Mammary epithelial cell (primary cell): ENCODE measurements at regions of chr16 and their contacts with region 1.

Region 1: GRCh38 chr16:2251483-2252240 is at the start of gene ECI1:
- DNase-seq: peak; percentile 93
- H3K4me3 ChIP-seq: peak within 1 kb of the TSS; percentile 56 to 61 (median 59)
- H3K27ac ChIP-seq: peak within 1 kb of the TSS; percentile 69
- H3K4me1 ChIP-seq: peaks cover 20% of the 10 kb centered on the region
- H3K27me3 ChIP-seq: no peaks in the 10 kb centered on the region
- CTCF ChIP-seq: peak; percentile 24 to 66
- total RNA-seq, gene ECI1: 79.3 to 84.7 TPM

Region 2: DNA sequence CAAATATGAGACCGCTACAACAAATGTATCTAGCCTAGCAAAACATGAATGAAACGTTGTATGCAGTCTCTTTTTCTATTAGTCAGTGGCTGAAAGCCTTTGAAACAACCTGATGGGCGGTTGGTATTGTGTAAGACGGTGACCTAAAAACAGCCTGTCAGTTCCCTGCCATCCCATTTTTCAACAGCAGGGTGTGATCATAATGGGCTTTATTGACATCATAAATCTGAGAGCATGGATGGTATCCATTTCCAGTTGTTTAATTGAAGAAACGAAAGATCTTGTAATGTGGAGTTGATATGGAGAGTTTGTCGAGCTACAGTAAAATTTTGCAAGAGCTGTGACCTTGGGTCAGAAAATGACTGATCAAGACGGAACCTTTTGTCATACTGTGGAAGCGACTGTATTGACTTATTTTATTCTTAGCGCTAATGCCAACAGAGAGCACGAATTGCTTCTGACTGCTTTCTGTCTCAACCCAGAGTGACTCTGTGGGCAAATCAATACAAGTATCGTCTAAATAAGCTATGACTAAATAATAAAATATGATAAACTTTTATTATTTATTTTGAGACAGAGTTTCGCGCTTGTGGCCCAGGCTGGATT is 367.4 kb before region 1 on chr16:
- CTCF ChIA-PET with region 1: no interaction called
- dilution Hi-C with region 1: no loop called
- in situ Hi-C with region 1: no loop called
- intact Hi-C with region 1: no loop called
- DNase-seq: no peak
- H3K4me3 ChIP-seq: no peak overlapping the region
- H3K27ac ChIP-seq: no peak overlapping the region
- H3K4me1 ChIP-seq: no peaks in the 10 kb centered on the region
- H3K27me3 ChIP-seq: no peaks in the 10 kb centered on the region
- CTCF ChIP-seq: peak; percentile 32 to 40

Region 3: GRCh38 chr16:2023098-2023925 is 228.3 kb before region 1 on chr16:
- CTCF ChIA-PET with region 1: no interaction called
- dilution Hi-C with region 1: no loop called
- in situ Hi-C with region 1: no loop called
- intact Hi-C with region 1: loop called (anchors 2 kb)
- DNase-seq: peak; percentile 74
- H3K4me3 ChIP-seq: peak overlapping the region in 1 of 3 experiments; percentile 28
- H3K27ac ChIP-seq: no peak overlapping the region
- H3K4me1 ChIP-seq: peaks cover 20% of the 10 kb centered on the region
- H3K27me3 ChIP-seq: peaks cover 11% of the 10 kb centered on the region
- CTCF ChIP-seq: peak; percentile 82 to 91

Region 4: DNA sequence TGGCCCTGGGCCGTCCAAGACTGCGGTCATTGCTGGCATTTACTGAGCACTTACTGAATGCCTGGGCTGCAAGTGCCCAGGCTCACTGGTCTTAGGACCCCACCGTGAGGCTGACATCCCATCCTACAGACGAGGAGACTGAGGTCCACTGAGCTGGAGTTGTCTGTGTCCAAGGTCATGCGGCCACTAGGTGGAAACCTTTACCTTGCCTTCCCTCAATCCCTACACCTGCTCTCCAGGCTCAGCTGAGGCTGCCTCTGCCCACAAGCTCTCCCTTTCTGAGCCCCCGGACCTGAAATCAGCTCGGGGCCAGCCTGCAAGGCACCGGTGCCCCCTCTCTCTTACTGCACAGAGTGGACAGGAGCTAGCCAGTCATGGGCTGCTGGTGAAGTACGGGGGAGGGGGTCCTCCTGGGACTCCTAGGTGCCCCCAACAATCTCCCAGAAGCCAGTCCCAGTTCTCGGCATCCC is 56.8 kb before region 1 on chr16:
- CTCF ChIA-PET with region 1: interaction called, 3 read pairs
- dilution Hi-C with region 1: no loop called
- in situ Hi-C with region 1: no loop called
- intact Hi-C with region 1: loop called (anchors 1 kb)
- DNase-seq: peak; percentile 54
- H3K4me3 ChIP-seq: peak overlapping the region in 1 of 3 experiments; percentile 44
- H3K27ac ChIP-seq: no peak overlapping the region
- H3K4me1 ChIP-seq: peaks cover 20% of the 10 kb centered on the region
- H3K27me3 ChIP-seq: no peaks in the 10 kb centered on the region
- CTCF ChIP-seq: peak; percentile 59 to 74

Region 5: GRCh38 chr16:2223375-2224182 is 28.1 kb before region 1 on chr16 and contains the start of gene E4F1:
- CTCF ChIA-PET with region 1: no interaction called
- dilution Hi-C with region 1: no loop called
- in situ Hi-C with region 1: no loop called
- intact Hi-C with region 1: loop called (anchors 2 kb)
- DNase-seq: peak; percentile 99
- H3K4me3 ChIP-seq: peak within 1 kb of the TSS; percentile 77 to 91 (median 88)
- H3K27ac ChIP-seq: peak within 1 kb of the TSS; percentile 53
- H3K4me1 ChIP-seq: peaks cover 19% of the 10 kb centered on the region
- H3K27me3 ChIP-seq: no peaks in the 10 kb centered on the region
- CTCF ChIP-seq: no peak
- total RNA-seq, gene E4F1: 22.0 to 24.8 TPM

Region 6: GRCh38 chr16:2474877-2475412 is 223.3 kb after region 1 on chr16 and contains the start of gene TBC1D24:
- CTCF ChIA-PET with region 1: no interaction called
- dilution Hi-C with region 1: no loop called
- in situ Hi-C with region 1: loop called in 1 of 2 experiments (anchors 25 kb)
- intact Hi-C with region 1: no loop called
- DNase-seq: peak; percentile 77
- H3K4me3 ChIP-seq: peak within 1 kb of the TSS; percentile 60 to 89 (median 84)
- H3K27ac ChIP-seq: peak within 1 kb of the TSS; percentile 22
- H3K4me1 ChIP-seq: peaks cover 32% of the 10 kb centered on the region
- H3K27me3 ChIP-seq: no peaks in the 10 kb centered on the region
- CTCF ChIP-seq: no peak
- total RNA-seq, gene TBC1D24: 11.4 to 12.3 TPM